A549 (cell line): ENCODE measurements at regions of chr11 and their contacts with region 1.

Region 1: DNA sequence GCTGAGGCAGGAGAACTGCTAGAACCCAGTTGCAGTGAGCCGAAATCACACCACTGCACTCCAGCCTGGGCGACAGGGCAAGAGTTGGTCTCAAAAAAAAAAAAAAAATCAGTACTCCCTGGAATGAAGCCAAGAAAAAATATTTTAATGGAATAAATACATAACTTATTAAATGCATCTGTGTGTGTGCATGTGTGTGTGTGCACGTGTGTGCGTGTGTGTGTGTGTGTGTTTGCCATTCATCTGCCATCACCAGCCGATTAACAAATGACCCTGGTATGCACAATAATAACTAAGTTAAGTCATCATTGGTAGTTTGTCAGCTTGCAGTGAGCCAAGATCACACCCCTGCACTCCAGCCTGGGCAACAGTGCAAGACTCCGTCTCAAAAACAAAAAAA is 35.0 kb upstream of the SCGB1A1 start:
- DNase-seq: no peak
- ATAC-seq: no peak
- H3K4me3 ChIP-seq: no peak overlapping the region
- H3K27ac ChIP-seq: no peak overlapping the region
- H3K4me1 ChIP-seq: peaks cover 22% of the 10 kb centered on the region
- CTCF ChIP-seq: no peak
- EP300 ChIP-seq: no peak
- POLR2A ChIP-seq: no peak
- RAD21 ChIP-seq: no peak

Region 2: DNA sequence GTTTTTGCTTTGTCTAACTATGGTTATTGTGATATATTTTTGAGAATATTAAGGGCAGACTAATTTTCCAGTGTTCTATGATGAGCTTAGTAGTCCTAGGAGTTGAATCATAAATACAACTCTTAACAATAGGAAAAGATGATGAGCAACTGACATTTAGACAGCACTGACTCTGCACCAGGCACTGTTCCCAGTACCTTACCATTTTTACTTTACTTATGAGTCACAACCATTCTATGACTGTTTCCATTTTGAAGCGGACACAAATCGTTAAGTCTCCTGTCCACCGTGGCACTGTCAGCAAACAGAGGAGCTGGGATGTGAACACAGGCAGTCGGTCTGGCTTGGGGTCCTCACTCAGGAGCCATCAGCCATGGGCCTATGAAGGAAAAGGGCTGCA is 117.3 kb before region 1 on chr11:
- CTCF ChIA-PET with region 1: no interaction called
- POLR2A ChIA-PET with region 1: no interaction called
- DNase-seq: no peak
- ATAC-seq: peak in 1 of 2 experiments; percentile 18; a peak in 1 of 6 replicates
- H3K4me3 ChIP-seq: no peak overlapping the region
- H3K27ac ChIP-seq: no peak overlapping the region
- H3K4me1 ChIP-seq: no peaks in the 10 kb centered on the region
- CTCF ChIP-seq: no peak
- EP300 ChIP-seq: no peak
- POLR2A ChIP-seq: no peak
- RAD21 ChIP-seq: no peak

Region 3: GRCh38 chr11:62322524-62322923 is 61.3 kb before region 1 on chr11:
- CTCF ChIA-PET with region 1: no interaction called
- POLR2A ChIA-PET with region 1: no interaction called
- DNase-seq: no peak
- ATAC-seq: no peak; a peak in 1 of 6 replicates
- H3K4me3 ChIP-seq: no peak overlapping the region
- H3K27ac ChIP-seq: no peak overlapping the region
- H3K4me1 ChIP-seq: peaks cover 18% of the 10 kb centered on the region
- CTCF ChIP-seq: no peak
- EP300 ChIP-seq: no peak
- POLR2A ChIP-seq: no peak
- RAD21 ChIP-seq: no peak

Region 4: DNA sequence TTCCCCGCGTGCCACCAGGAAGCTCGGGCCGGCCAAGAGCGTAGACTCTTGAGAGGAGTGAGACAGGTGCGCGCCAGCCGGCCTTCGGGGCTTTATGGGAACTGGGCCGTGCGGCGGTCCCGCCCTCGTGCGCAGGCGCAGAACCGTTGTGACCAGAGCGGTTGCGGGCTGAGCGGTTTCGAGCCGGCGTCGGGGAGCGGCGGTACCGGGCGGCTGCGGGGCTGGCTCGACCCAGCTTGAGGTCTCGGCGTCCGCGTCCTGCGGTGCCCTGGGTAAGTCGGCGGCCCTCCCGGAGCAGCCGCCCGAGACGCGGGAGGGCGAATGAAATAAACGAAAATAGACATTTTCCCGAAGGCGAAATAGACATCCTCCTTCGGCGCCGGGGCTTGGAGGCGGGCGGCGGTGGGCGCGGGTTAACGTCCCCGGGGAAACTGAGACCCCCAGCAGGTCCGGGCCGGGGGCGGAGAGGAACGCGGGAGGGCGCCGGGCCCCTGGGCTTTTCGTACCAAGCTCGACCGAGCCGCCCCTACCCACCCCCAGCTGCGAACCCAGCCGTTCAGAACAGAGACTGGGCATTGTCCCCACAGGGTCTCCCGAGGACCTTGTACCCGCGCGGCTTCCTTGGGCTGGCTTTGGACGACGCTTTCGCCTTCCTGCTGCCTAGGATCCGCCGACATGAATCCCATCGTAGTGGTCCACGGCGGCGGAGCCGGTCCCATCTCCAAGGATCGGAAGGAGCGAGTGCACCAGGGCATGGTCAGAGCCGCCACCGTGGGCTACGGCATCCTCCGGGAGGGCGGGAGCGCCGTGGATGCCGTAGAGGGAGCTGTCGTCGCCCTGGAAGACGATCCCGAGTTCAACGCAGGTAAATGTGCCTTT is 46.3 kb before region 1 on chr11 and contains the start of gene ASRGL1:
- CTCF ChIA-PET with region 1: interaction called, 11 read pairs
- POLR2A ChIA-PET with region 1: no interaction called
- DNase-seq: peak; percentile 82 to 87
- ATAC-seq: peak; percentile 89 to 95
- H3K4me3 ChIP-seq: peak within 1 kb of the TSS; percentile 79
- H3K27ac ChIP-seq: peak within 1 kb of the TSS; percentile 76 to 88
- H3K4me1 ChIP-seq: no peaks in the 10 kb centered on the region
- CTCF ChIP-seq: no peak
- EP300 ChIP-seq: no peak
- POLR2A ChIP-seq: peak; percentile 50
- RAD21 ChIP-seq: no peak
- polyA plus RNA-seq, gene ASRGL1: 13.6 and 19.5 TPM in 2 replicates

Region 5: DNA sequence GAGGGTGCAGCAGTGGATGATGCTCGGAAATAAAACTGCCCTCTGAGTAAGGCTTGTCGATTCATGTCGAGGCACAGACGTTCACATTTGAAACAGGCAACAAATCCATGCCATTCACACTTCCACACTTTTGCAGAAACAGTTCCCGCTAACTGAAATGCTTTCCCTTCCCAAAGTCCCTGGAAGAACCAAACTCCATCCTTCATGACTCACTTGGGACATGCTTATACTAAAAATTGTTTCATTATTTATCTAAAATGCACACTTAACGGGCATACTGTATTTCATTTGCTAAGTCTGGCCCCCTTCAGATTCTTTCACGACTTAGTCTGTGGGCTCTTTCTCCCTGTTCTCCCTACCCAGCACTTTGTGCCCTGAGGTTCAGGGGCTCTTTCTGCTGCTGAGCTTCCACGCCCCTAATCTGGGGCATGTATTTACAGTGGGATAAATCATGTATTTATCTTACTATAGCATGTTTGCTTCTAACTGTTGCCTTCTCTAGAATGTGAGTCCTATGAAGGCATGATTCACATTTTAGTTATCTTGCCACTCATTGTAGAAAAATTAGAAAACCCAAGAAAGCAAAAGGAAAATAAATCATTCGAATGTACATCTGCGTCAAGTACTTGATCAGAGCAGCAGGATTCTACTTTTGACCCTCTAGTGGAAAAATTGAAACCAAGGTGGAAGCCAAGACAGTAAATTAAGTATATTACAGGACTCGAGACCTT is 47.5 kb after region 1 on chr11:
- CTCF ChIA-PET with region 1: no interaction called
- POLR2A ChIA-PET with region 1: no interaction called
- DNase-seq: peak in 1 of 2 experiments; percentile 42
- ATAC-seq: peak; percentile 63 to 67
- H3K4me3 ChIP-seq: no peak overlapping the region
- H3K27ac ChIP-seq: peak overlapping the region; percentile 47 to 86; a peak in 5 of 6 replicates
- H3K4me1 ChIP-seq: peaks cover 54% of the 10 kb centered on the region
- CTCF ChIP-seq: no peak
- EP300 ChIP-seq: no peak
- POLR2A ChIP-seq: no peak
- RAD21 ChIP-seq: no peak

Region 6: GRCh38 chr11:62652161-62653006 is 268.6 kb after region 1 on chr11:
- CTCF ChIA-PET with region 1: no interaction called
- POLR2A ChIA-PET with region 1: no interaction called
- DNase-seq: no peak
- ATAC-seq: peak in 1 of 2 experiments; percentile 60; a peak in 3 of 6 replicates
- H3K4me3 ChIP-seq: peak overlapping the region; percentile 75
- H3K27ac ChIP-seq: peak overlapping the region; percentile 85 to 97
- H3K4me1 ChIP-seq: peaks cover 10% of the 10 kb centered on the region; the same call in 2 of the 3 replicates
- CTCF ChIP-seq: no peak
- EP300 ChIP-seq: no peak
- POLR2A ChIP-seq: no peak
- RAD21 ChIP-seq: no peak